Activated CD4-positive, alpha-beta memory T cell treated with anti-CD3 and anti-CD28 coated beads for 36 hours (primary cell): ENCODE measurements at regions of chr11 and their contacts with region 1.

Region 1: DNA sequence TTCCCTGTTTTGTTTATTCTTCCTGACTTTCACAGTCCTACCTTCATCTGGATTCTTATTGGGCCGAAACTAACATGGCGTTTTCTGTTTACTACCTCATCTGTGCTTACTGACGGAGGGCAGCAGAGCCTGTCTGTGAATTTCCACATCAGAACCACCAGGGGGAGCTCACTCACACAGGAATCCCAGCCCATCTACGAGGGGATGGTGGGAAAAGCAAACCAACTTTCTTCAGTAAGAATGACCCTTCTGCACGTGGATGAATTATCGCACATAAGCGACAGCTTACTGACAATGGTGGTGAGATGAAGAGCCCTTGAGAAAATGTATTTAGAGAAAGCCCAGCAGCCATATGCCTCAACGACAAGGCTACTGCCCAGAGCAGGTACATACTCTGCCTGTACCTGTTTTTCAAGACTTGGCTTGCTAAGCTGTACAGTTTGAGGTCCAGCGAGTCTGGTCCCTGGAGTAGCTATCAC is 42.5 kb downstream of the LARGE2 start:
- DNase-seq: peak; percentile 69
- H3K4me3 Mint-ChIP-seq: no peak overlapping the region
- H3K27ac Mint-ChIP-seq: no peak overlapping the region
- H3K4me1 Mint-ChIP-seq: no peaks in the 10 kb centered on the region
- H3K27me3 Mint-ChIP-seq: no peaks in the 10 kb centered on the region

Region 2: DNA sequence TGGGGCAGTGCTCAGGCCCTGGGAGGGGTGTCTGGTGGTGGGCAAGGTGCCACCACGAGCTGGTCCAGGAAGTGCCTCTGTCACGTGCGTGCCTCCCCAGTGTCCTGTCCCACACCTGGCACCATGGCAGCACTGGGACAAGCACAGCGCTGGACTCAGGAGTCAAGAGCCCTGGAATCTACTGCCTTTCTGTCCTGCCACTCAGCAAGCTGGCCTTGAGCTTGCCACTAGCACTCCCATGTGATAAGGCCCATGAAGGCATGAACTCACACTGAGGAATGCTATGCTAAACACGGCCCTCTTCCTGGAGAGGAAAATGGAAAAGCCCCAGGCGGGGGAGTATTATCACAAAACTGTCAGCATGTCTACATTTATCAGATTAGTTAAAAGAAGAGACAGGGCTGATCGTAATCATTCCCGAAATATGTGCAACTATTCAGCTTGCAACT is 210.7 kb before region 1 on chr11:
- CTCF ChIA-PET with region 1: no interaction called
- POLR2A ChIA-PET with region 1: no interaction called
- intact Hi-C with region 1: no loop called
- DNase-seq: no peak
- H3K4me3 Mint-ChIP-seq: no peak overlapping the region
- H3K27ac Mint-ChIP-seq: no peak overlapping the region
- H3K4me1 Mint-ChIP-seq: no peaks in the 10 kb centered on the region
- H3K27me3 Mint-ChIP-seq: peaks cover 33% of the 10 kb centered on the region

Region 3: GRCh38 chr11:45949992-45950407 is 14.9 kb before region 1 on chr11:
- CTCF ChIA-PET with region 1: interaction called, 34 read pairs
- POLR2A ChIA-PET with region 1: no interaction called
- intact Hi-C with region 1: no loop called
- DNase-seq: no peak
- H3K4me3 Mint-ChIP-seq: no peak overlapping the region
- H3K27ac Mint-ChIP-seq: no peak overlapping the region
- H3K4me1 Mint-ChIP-seq: no peaks in the 10 kb centered on the region
- H3K27me3 Mint-ChIP-seq: no peaks in the 10 kb centered on the region

Region 4: GRCh38 chr11:45993531-45994001 is 28.6 kb after region 1 on chr11:
- CTCF ChIA-PET with region 1: interaction called, 13 read pairs
- POLR2A ChIA-PET with region 1: no interaction called
- intact Hi-C with region 1: no loop called
- DNase-seq: no peak
- H3K4me3 Mint-ChIP-seq: no peak overlapping the region
- H3K27ac Mint-ChIP-seq: no peak overlapping the region
- H3K4me1 Mint-ChIP-seq: peaks cover 21% of the 10 kb centered on the region
- H3K27me3 Mint-ChIP-seq: no peaks in the 10 kb centered on the region

Region 5: GRCh38 chr11:46012185-46012584 is 47.2 kb after region 1 on chr11:
- CTCF ChIA-PET with region 1: interaction called, 153 read pairs
- POLR2A ChIA-PET with region 1: no interaction called
- intact Hi-C with region 1: no loop called
- DNase-seq: no peak
- H3K4me3 Mint-ChIP-seq: no peak overlapping the region
- H3K27ac Mint-ChIP-seq: no peak overlapping the region
- H3K4me1 Mint-ChIP-seq: no peaks in the 10 kb centered on the region
- H3K27me3 Mint-ChIP-seq: no peaks in the 10 kb centered on the region

Region 6: GRCh38 chr11:46315033-46315738 is 350.2 kb after region 1 on chr11:
- CTCF ChIA-PET with region 1: interaction called, 19 read pairs
- POLR2A ChIA-PET with region 1: no interaction called
- intact Hi-C with region 1: loop called (anchors 2 kb)
- DNase-seq: peak; percentile 83
- H3K4me3 Mint-ChIP-seq: no peak overlapping the region
- H3K27ac Mint-ChIP-seq: peak overlapping the region; percentile 10
- H3K4me1 Mint-ChIP-seq: peaks cover 19% of the 10 kb centered on the region
- H3K27me3 Mint-ChIP-seq: no peaks in the 10 kb centered on the region